Tibial artery (tissue), 4 donors: ENCODE measurements at regions of chr22 and their contacts with region 1.

Region 1: DNA sequence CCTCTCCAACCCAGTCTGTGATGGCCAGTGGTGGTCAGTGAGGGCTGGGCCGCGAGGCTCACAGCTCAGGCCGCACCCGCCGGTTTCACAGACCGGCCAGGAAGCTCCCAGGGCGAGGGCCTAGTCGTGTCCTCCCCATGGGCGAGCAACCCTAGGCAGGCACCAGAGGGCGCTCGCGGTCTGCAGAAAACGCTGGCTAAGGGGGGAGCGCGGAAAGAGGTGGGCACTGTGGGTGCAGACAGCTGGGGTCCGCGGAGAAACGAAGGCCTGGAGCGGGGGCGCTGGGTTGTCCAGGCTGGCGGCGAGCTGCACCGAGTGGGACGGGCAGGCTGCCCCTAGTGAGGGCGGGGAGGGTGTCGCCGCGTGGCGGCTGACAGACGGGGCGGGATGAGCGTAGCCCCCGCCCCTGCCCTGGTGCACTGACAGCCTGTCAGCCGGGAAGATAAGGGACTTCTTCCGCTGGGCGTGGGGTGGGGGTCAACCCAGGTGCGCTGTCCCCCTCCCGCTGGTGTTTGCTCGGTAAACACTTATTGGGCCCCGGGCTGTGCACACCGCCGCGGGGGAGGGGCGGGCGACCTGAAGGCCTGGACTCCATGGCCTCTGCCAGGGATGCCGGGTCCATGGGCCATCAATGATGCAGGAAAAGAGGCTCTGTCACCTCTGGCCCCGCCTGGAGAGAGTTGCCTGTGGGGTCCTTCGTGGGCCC is 7.5 kb downstream of the GP1BB start:
- DNase-seq: peak; percentile 72 to 87
- H3K4me3 ChIP-seq: peak overlapping the region; percentile 17 to 41
- H3K27ac ChIP-seq: no peak overlapping the region
- H3K4me1 ChIP-seq: peaks cover 0 to 9% (median 7%) of the 10 kb centered on the region in 4 donors
- H3K27me3 ChIP-seq: peaks cover 0 to 7% of the 10 kb centered on the region in 2 donors
- CTCF ChIP-seq: peak; percentile 94 to 96

Region 2: GRCh38 chr22:19607192-19608002 is 123.4 kb before region 1 on chr22:
- intact Hi-C with region 1: no loop called
- DNase-seq: no peak
- H3K4me3 ChIP-seq: no peak overlapping the region
- H3K27ac ChIP-seq: no peak overlapping the region
- H3K4me1 ChIP-seq: no peaks in the 10 kb centered on the region
- H3K27me3 ChIP-seq: peaks cover 0 to 46% of the 10 kb centered on the region in 2 donors
- CTCF ChIP-seq: no peak

Region 3: DNA sequence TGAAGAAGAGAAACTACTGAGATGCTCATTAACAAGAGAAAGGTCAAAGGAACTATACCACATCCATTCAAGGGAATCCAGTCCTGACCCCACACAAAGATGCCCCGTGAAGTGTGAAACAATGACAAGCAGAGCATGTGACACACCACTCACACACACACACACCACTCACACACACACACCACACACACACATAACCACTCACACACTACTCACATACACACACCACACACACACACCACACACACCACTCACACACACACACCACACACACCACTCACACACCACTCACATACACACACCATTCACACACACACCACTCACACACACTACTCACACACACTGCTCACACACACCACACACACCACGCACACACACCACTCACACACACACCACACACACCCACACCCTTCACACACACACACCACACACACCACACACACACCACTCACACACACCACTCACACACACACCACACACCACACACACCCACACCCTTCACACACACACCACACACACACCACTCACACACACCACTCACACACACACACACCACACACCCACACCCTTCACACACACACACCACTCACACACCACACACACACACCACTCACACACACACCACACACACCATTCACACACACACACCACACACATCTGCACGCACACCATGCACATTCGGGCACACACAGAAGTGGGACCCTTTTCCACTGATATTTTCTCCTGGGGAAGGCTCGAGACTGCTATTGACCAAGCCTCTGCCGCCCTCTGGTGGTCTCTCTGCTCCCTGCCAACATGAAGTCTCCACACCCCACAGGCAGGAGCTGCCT is 178.8 kb after region 1 on chr22:
- intact Hi-C with region 1: loop called (anchors 2 kb)
- DNase-seq: peak; percentile 86 to 88
- H3K4me3 ChIP-seq: no peak overlapping the region
- H3K27ac ChIP-seq: no peak overlapping the region
- H3K4me1 ChIP-seq: no peaks in the 10 kb centered on the region
- H3K27me3 ChIP-seq: no peaks in the 10 kb centered on the region
- CTCF ChIP-seq: peak; percentile 86 to 95